Activated CD4-positive, alpha-beta T cell treated with anti-CD3 and anti-CD28 coated beads for 36 hours (primary cell): ENCODE measurements at regions of chr14 and their contacts with region 1.

Region 1: DNA sequence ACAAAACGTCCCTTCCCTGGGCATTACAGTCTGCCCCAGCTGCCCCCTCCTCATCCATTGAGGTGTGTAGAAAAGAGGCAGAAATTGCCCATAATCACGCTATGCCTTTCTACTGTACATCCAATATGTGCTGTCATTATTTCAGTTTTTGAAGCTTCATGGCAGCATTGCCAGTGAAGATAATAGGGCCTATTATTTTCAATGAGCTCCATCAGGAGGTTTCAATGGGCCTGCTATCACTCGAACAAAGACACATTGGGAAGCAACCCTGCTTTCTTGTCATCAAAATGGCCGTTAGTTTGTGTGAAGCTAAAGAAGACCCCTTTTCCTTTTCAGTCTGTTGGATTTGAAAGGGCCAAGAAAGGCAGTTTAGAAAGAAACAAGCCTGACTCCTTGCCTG is 653.8 kb downstream of the NOVA1 start:
- DNase-seq: no peak
- ATAC-seq: no peak
- H3K4me3 Mint-ChIP-seq: no peak overlapping the region
- H3K27ac Mint-ChIP-seq: no peak overlapping the region
- H3K4me1 Mint-ChIP-seq: no peaks in the 10 kb centered on the region
- H3K27me3 Mint-ChIP-seq: no peaks in the 10 kb centered on the region

Region 2: DNA sequence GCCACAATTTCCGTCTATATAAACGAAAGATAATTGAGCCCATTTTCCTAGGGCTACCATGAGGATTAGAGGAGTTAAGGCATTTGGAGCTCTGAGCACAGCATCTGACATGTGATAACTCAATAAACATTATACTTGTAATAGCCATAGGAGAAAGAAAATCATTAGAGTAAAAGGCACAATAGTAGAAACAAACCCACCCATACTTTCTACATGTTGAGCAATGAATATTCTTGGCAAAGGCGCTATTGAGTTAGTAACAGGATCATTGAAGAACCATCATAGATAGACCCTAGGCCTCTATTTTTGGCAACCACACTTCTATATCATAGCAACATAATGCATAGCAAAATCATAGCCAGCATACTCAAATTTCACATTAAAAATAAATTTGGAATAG is 10.3 kb before region 1 on chr14:
- CTCF ChIA-PET with region 1: no interaction called
- POLR2A ChIA-PET with region 1: no interaction called
- intact Hi-C with region 1: loop called in 1 of 2 experiments (anchors 1 kb)
- DNase-seq: no peak
- ATAC-seq: no peak
- H3K4me3 Mint-ChIP-seq: no peak overlapping the region
- H3K27ac Mint-ChIP-seq: no peak overlapping the region
- H3K4me1 Mint-ChIP-seq: no peaks in the 10 kb centered on the region
- H3K27me3 Mint-ChIP-seq: no peaks in the 10 kb centered on the region